GM12878 (cell line): ENCODE measurements at regions of chr3 and their contacts with region 1.

Region 1: DNA sequence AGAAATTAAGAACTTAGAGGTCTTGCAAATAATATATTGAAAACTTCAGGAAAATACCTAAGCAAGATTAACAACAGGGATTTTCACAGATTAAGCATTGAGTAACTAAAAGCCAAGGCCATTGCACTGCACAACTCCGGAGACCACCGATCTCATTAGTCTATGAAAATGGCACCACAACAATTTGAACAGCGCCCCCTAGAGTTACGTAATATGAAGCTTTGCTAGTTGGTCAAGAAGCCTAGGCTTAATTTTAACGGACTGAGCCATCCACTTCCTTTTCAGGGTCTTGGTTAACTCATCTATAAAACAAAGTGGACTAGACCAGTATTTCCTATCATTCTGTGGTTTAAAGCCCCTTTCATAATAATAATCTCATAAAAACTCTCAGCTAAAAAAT is 24.8 kb downstream of the TMEM212 start:
- DNase-seq: no peak
- ATAC-seq: no peak
- H3K4me3 ChIP-seq: no peak overlapping the region
- H3K27ac ChIP-seq: no peak overlapping the region
- H3K4me1 ChIP-seq: no peaks in the 10 kb centered on the region
- H3K27me3 ChIP-seq: no peaks in the 10 kb centered on the region
- CTCF ChIP-seq: peak; percentile 14 to 26 (median 22); a peak in 2 of 6 replicates
- EP300 ChIP-seq: no peak
- POLR2A ChIP-seq: no peak
- RAD21 ChIP-seq: no peak

Region 2: DNA sequence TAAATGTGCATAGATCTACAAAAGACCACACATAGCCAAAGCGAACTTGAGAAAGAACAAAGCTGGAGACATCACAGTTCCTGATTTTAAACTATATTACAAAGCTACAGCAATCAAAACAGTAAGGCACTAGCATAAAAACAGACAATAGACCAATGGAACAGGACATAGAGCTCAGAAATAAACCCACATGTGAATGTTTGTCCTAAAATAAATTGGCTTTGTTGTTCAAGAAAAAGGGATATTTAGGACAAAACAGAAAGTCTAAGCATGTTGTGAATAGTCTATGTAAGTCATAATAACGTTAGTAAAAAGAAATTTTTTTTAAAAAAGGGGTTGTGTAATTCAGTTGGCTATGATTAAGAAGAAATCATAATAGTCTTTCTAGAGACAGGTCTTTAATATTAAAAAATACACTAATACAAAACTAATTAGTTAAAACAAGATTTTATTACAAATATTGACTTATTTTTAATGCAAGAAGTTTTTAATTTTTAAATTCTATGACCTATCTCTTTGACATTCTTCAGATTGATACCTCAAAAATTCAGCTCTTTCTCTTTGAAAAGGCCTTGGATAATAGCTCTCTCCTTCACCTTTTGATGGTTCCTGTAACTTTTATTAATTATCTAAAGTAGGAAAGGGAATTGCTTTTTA is 13.2 kb before region 1 on chr3:
- CTCF ChIA-PET with region 1: interaction called, 16 read pairs
- POLR2A ChIA-PET with region 1: no interaction called
- RAD21 ChIA-PET with region 1: no interaction called
- SMC1A ChIA-PET with region 1: interaction called, 7 read pairs
- in situ Hi-C with region 1: no loop called
- intact Hi-C with region 1: no loop called
- DNase-seq: no peak
- ATAC-seq: no peak
- H3K4me3 ChIP-seq: no peak overlapping the region
- H3K27ac ChIP-seq: no peak overlapping the region
- H3K4me1 ChIP-seq: no peaks in the 10 kb centered on the region
- H3K27me3 ChIP-seq: no peaks in the 10 kb centered on the region
- CTCF ChIP-seq: no peak
- EP300 ChIP-seq: no peak
- POLR2A ChIP-seq: no peak
- RAD21 ChIP-seq: no peak

Region 3: GRCh38 chr3:172203522-172204258 is 335.7 kb after region 1 on chr3:
- CTCF ChIA-PET with region 1: no interaction called
- POLR2A ChIA-PET with region 1: no interaction called
- RAD21 ChIA-PET with region 1: no interaction called
- SMC1A ChIA-PET with region 1: no interaction called
- in situ Hi-C with region 1: no loop called
- intact Hi-C with region 1: no loop called
- DNase-seq: no peak
- ATAC-seq: no peak
- H3K4me3 ChIP-seq: no peak overlapping the region
- H3K27ac ChIP-seq: no peak overlapping the region
- H3K4me1 ChIP-seq: no peaks in the 10 kb centered on the region
- H3K27me3 ChIP-seq: no peaks in the 10 kb centered on the region
- CTCF ChIP-seq: no peak
- EP300 ChIP-seq: no peak
- POLR2A ChIP-seq: no peak
- RAD21 ChIP-seq: no peak